Sigmoid colon (tissue), 7 donors: ENCODE measurements at regions of chrX and their contacts with region 1.

Region 1: DNA sequence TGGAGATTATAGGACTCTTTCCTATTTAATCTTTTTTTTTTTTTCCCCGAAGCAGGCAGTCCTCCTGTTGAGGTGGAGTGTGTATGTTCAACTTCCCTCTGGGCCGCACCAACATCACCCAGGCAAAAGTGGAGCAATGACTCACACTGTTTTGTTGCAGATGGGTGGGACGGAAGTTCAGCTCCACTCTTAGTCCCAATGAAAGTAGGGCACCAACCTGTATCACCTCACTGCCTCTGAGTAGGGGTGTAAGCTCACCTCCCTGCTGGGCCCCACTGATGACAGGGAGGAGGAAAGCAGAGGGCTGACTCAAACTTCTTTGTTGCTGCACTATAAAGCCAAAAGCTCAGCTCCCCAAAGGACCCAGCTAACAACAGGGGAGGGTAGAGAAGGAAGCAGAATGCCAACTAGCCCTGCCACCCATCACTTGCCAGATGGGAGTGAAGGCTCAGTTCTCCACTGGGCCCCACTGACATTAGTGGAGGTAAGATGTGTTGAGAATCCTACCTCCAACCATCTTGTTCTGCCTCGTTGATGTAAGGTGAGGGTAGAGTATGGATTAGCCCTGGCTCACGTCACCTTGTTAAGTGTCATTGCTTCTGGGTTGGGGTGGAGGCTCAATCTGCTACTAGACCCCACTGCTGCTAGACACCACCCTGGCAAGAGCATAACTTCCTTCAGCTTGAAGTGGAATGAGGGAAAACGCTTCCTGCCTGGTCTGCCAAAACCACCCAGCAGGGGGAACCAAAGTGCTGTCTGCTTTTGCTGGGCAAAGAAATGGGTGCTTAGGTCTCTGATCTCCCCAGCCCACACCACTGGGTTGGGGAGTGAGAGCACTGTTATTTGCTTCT is 14.1 kb downstream of the RPS6KA3 start:
- DNase-seq: peak; percentile 63
- H3K4me3 ChIP-seq: no peak overlapping the region
- H3K27ac ChIP-seq: no peak overlapping the region
- H3K4me1 ChIP-seq: peaks cover 0 to 12% (median 0%) of the 10 kb centered on the region in 4 donors
- H3K27me3 ChIP-seq: no peaks in the 10 kb centered on the region
- CTCF ChIP-seq: peak in 3 of 4 experiments; percentile 34 to 51 (median 42)
- EP300 ChIP-seq: no peak
- POLR2A ChIP-seq: no peak

Region 2: GRCh38 chrX:20442597-20442996 is 190.0 kb after region 1 on chrX:
- intact Hi-C with region 1: loop called (anchors 5 kb)
- DNase-seq: peak; percentile 84
- H3K4me3 ChIP-seq: no peak overlapping the region
- H3K27ac ChIP-seq: no peak overlapping the region
- H3K4me1 ChIP-seq: no peaks in the 10 kb centered on the region
- H3K27me3 ChIP-seq: no peaks in the 10 kb centered on the region
- CTCF ChIP-seq: peak; percentile 31 to 56 (median 42)
- EP300 ChIP-seq: no peak
- POLR2A ChIP-seq: no peak